ENCODE measurements at regions of chr5 and their contacts with region 1.

Region 1: GRCh38 chr5:63022403-63022802 is 443.8 kb downstream of the LRRC70 start:
- DNase-seq: no peak
- ATAC-seq: no peak
- H3K4me3 ChIP-seq: no peak overlapping the region
- H3K4me3 Mint-ChIP-seq: no peak overlapping the region
- H3K27ac ChIP-seq: no peak overlapping the region
- H3K27ac Mint-ChIP-seq: no peak overlapping the region
- H3K4me1 ChIP-seq: no peaks in the 10 kb centered on the region
- H3K4me1 Mint-ChIP-seq: no peaks in the 10 kb centered on the region
- H3K27me3 ChIP-seq: no peaks in the 10 kb centered on the region
- H3K27me3 Mint-ChIP-seq: no peaks in the 10 kb centered on the region
- CTCF ChIP-seq: no peak

Region 2: GRCh38 chr5:62542720-62543119 is 479.7 kb before region 1 on chr5:
- CTCF ChIA-PET with region 1: no interaction called
- POLR2A ChIA-PET with region 1: no interaction called
- intact Hi-C with region 1: loop called in 1 of 2 experiments (anchors 5 kb)
- DNase-seq: no peak
- ATAC-seq: no peak
- H3K4me3 ChIP-seq: no peak overlapping the region
- H3K4me3 Mint-ChIP-seq: no peak overlapping the region
- H3K27ac ChIP-seq: no peak overlapping the region
- H3K27ac Mint-ChIP-seq: no peak overlapping the region
- H3K4me1 ChIP-seq: no peaks in the 10 kb centered on the region
- H3K4me1 Mint-ChIP-seq: no peaks in the 10 kb centered on the region
- H3K27me3 ChIP-seq: no peaks in the 10 kb centered on the region
- H3K27me3 Mint-ChIP-seq: no peaks in the 10 kb centered on the region
- CTCF ChIP-seq: no peak